Activated T-helper 1 cell treated with anti-CD3 and anti-CD28 coated beads, Interleukin-12 subunit alpha, Interleukin-12 subunit beta, Interleukin-2, Interleukin-4 antibody, amounts not matched to agents 30 ng/mL and 10 ng/mL and 1 ng/mL, durations not matched to agents 14 hours and 24 hours and 36 hours (primary cell): ENCODE measurements at regions of chr14 and their contacts with region 1.

Region 1: GRCh38 chr14:52824507-52824906 is 33.1 kb upstream of the GNPNAT1 start:
- DNase-seq: no peak
- H3K4me3 Mint-ChIP-seq: no peak overlapping the region
- H3K27ac Mint-ChIP-seq: no peak overlapping the region
- H3K4me1 Mint-ChIP-seq: no peaks in the 10 kb centered on the region
- H3K27me3 Mint-ChIP-seq: peaks cover 14% of the 10 kb centered on the region

Region 2: DNA sequence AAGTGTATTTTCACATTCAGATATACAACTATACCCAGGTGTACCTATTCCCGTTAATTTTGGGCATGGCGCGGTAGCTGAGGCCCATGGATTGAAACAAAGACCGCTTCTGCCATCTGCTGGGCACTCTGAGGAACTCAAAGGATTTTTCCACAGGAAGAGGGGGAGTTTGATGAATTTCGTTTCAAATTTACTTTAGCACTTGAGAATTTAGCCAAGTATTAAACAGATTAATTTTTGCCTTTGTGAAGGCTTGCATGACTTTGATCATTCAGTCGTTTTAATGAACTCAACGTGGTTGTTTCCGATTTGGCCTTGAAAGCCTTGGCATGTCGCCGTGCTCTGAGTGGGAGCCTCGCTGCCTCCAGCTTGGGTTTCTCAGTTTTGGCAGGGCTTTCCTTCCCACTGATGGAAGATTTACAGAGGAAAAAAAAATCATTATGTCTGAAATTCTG is 481.8 kb after region 1 on chr14:
- intact Hi-C with region 1: loop called (anchors 1 kb)
- DNase-seq: peak; percentile 5
- H3K4me3 Mint-ChIP-seq: peak overlapping the region; percentile 76
- H3K27ac Mint-ChIP-seq: no peak overlapping the region
- H3K4me1 Mint-ChIP-seq: peaks cover 11% of the 10 kb centered on the region
- H3K27me3 Mint-ChIP-seq: peaks cover 8% of the 10 kb centered on the region